ENCODE measurements at regions of chr16 and their contacts with region 1.

Region 1: DNA sequence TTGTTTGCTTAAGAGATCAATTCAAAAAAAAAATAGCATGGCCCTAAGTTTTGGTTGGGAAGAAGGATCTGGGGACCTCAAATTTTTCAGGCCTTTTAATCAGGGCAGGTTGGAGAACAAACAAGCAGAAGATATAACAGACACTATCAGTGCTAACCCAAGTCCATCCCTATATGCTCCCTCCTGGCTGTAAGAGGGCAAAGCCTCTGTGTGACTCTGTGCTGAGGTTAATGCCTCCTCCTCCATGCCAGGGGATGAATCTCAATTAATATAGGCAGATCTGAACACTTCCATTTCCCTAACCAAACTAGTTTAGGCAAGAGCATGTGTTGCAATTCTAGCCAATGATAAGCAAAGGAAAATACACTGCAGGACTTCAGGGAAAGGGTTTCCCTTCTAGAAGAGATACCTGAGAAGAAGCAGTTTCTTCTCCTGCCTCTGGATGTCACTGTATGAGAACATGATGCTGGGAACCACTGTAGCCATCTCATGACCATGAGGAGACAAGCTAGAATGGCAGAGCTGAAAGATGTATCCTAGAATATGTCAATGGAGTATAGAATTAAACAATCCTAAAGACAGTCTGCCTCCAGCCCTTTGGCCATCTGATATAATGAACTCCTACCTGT is 76.0 kb downstream of the CHD9NB start:
- DNase-seq: peak; percentile 7
- ATAC-seq: peak; percentile 86
- H3K4me3 ChIP-seq: no peak overlapping the region
- H3K27ac ChIP-seq: no peak overlapping the region
- H3K4me1 ChIP-seq: no peaks in the 10 kb centered on the region
- H3K27me3 ChIP-seq: no peaks in the 10 kb centered on the region
- CTCF ChIP-seq: peak; percentile 15 to 44 (median 33); a peak in 5 of 6 replicates
- POLR2A ChIP-seq: no peak
- RAD21 ChIP-seq: peak; percentile 54

Region 2: DNA sequence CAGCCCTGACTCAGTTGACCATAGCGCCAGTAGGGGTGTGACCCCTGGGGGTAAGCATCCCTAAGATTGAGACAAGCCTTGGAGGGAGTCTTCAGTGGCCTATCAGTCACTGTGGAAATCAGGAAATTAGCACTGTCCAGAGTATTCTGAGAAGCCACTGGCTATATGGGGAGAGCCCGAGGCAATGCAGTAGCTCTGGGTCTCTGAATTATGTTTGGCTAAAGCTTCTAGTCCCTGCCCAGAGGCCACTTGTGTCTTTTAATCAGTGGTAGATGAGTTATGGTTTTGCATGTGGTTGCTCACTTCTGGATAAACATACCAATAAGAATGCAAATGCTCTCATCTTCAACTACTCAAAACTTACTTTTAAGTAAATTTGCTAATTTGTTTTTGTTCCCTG is 329.1 kb before region 1 on chr16:
- CTCF ChIA-PET with region 1: no interaction called
- POLR2A ChIA-PET with region 1: no interaction called
- RAD21 ChIA-PET with region 1: no interaction called
- intact Hi-C with region 1: no loop called
- DNase-seq: no peak
- ATAC-seq: no peak
- H3K4me3 ChIP-seq: no peak overlapping the region
- H3K27ac ChIP-seq: no peak overlapping the region
- H3K4me1 ChIP-seq: no peaks in the 10 kb centered on the region
- H3K27me3 ChIP-seq: no peaks in the 10 kb centered on the region
- CTCF ChIP-seq: no peak
- POLR2A ChIP-seq: no peak
- RAD21 ChIP-seq: no peak

Region 3: DNA sequence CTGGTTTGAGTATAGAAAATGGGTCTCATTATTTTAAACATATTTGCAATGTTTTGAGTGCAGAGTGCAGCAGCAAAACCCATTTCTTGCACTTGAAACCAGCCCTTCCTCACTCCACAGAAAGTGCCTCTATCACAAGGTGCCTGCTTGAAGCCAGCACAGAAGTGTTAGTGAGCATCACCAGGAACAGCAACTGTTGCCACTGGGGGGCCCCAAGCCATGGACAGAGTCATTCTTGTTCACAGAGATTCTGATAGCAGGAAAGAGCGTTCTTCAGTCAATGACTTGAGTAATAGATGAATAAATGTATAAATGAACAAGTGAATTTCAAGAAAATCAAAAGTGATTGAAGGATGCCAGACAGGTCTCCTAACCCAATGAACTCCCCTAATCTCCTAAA is 30.4 kb after region 1 on chr16:
- CTCF ChIA-PET with region 1: no interaction called
- POLR2A ChIA-PET with region 1: no interaction called
- RAD21 ChIA-PET with region 1: interaction called in 1 of 2 experiments, 10 read pairs
- intact Hi-C with region 1: no loop called
- DNase-seq: no peak
- ATAC-seq: peak; percentile 55; the same call in 1 of the 2 replicates
- H3K4me3 ChIP-seq: no peak overlapping the region
- H3K27ac ChIP-seq: no peak overlapping the region
- H3K4me1 ChIP-seq: no peaks in the 10 kb centered on the region
- H3K27me3 ChIP-seq: peaks cover 4% of the 10 kb centered on the region; the same call in 1 of the 2 replicates
- CTCF ChIP-seq: no peak
- POLR2A ChIP-seq: no peak
- RAD21 ChIP-seq: no peak

Region 4: DNA sequence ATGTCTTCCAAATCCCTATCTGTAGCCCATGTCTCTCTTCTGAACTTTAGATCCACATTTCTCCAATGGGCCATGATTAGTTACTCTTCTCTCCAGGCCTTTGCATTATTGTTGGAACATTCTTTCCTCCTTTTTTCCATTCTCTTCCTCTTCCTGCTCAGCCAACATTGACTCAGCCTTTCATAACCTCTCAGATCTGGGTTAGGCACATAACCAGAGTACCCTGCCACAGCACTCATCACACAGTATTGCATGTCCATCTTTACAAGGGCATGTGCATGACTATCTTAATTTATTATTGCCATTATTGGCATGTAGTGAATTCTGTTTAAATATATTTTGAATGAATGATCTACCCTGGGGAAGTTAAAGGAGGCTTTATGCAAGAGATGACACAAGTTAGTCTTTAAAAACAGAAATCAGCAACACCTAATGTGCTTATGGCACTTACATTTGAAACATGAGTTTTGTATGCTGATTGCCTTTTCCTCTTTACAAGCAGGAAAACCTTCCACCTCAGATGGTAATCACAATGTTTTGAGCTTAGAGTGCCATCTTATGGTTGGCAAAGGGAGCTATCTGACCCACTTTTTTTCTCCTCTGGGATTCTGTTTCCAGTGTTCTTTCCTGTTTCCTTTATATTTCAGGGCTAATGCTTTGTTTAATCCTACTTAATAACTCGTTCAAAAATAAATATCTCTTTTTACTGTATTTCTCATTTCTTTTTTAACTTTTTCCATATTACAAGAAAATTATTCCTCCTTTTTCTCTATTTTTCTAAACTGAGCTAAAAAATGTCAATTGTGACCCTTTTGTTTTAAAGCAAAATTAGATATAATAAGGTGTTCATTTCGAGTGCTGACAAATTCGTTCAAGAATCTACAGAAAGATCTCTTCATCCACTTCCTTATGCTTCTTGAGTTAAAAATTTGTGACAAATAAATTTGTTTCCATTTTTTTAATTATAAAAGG is 306.6 kb after region 1 on chr16:
- CTCF ChIA-PET with region 1: interaction called, 5 read pairs
- POLR2A ChIA-PET with region 1: no interaction called
- RAD21 ChIA-PET with region 1: no interaction called
- intact Hi-C with region 1: loop called (anchors 10 kb)
- DNase-seq: peak; percentile 46
- ATAC-seq: peak; percentile 70
- H3K4me3 ChIP-seq: no peak overlapping the region
- H3K27ac ChIP-seq: no peak overlapping the region
- H3K4me1 ChIP-seq: no peaks in the 10 kb centered on the region
- H3K27me3 ChIP-seq: no peaks in the 10 kb centered on the region
- CTCF ChIP-seq: peak; percentile 59 to 71 (median 68); a peak in 5 of 6 replicates
- POLR2A ChIP-seq: no peak
- RAD21 ChIP-seq: peak; percentile 79

Measured in HCT116 (cell line).